Transverse colon (tissue), 4 donors: ENCODE measurements at regions of chr20 and their contacts with region 1.

Region 1: DNA sequence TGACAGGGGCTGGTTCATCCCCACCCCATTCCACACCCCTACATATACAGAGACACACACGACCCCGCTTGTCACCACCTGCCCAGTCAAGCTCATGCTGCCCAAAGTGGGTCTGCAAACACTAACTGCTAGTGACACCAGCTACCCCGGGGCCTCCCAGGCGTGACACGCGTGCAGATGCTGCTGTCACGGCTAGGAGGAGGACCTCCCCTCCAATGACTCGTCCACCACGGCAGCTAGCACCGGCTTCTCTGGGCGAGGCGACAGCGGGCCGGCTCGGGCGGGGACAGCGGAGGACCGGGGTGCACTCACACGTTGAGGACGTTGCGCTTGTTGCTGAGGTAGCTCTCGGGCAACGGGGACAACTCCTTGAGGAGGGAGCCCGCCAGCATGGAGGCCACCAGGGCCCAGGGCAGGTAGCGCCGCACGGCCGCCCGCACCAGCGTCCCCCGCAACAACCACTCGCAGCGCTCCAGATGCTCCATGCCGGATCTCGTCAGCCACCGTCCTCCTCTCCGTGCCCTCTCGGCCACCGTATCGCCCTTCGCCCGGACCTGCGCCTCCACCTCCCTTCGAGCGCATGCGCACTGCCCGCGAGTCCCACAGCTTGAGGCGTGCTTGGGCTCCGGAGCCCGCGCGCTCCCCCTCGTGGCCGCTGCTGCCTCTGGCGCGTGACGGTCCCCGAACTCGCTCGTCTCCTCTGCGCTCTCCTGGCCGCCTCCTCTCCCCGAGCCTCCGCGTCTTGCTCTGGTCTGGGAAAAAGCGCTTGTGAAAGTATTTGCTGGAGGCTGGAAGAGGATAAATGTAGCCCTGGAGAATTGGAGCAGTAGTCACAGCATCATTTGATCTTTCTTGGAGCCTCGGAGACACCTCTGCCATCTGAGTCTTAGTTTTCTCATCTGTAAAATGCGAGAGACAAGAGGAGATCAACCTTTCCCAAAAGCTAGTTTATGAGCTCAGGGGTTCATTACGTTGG is at the start of gene FITM2:
- DNase-seq: peak; percentile 99
- H3K4me3 ChIP-seq: peak within 1 kb of the TSS; percentile 58 to 77 (median 64)
- H3K27ac ChIP-seq: peak within 1 kb of the TSS; percentile 64 to 88 (median 84)
- H3K4me1 ChIP-seq: peaks cover 0 to 21% (median 16%) of the 10 kb centered on the region in 4 donors
- H3K27me3 ChIP-seq: no peaks in the 10 kb centered on the region
- CTCF ChIP-seq: peak; percentile 87 to 98 (median 95)
- EP300 ChIP-seq: no peak
- POLR2A ChIP-seq: peak; percentile 53
- total RNA-seq, gene FITM2: 4.1 to 12.4 (median 9.7) TPM

Region 2: DNA sequence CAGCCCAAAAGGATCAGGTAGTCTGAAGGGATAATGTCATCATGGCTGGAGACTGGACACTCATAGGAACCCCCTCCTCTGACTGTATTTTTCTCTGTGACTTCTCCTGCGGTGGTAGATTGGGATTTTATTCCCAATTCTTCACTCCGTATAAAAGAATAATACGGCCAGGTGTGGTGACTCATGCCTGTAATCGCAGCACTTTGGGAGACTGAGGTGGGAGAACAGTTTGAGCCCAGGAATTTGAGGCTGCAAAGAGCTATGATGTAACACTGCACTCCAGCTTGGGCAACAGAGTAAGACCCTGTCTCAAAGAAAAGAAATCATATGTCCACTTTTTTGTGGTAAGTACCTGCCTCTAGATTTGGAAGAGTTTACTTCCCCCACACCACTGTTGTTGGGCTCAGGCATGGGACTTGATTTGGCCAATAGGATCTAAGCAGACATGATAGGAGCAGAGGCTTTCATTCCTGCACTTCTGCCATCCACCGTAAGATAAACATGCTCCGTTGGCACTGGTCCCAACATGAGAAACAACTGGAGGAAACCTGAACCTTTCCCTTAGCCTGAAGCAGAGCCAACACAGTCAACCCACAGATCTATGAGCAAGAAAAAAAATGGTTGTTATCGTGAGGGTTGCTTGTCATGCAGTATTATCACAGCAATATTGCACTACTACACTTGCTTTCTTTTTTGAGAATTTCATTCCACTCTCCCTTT is 206.0 kb before region 1 on chr20:
- in situ Hi-C with region 1: loop called in 1 of 4 experiments (anchors 25 kb)
- intact Hi-C with region 1: no loop called
- DNase-seq: no peak
- H3K4me3 ChIP-seq: no peak overlapping the region
- H3K27ac ChIP-seq: no peak overlapping the region
- H3K4me1 ChIP-seq: no peaks in the 10 kb centered on the region
- H3K27me3 ChIP-seq: peaks cover 25% of the 10 kb centered on the region
- CTCF ChIP-seq: no peak
- EP300 ChIP-seq: no peak
- POLR2A ChIP-seq: no peak

Region 3: DNA sequence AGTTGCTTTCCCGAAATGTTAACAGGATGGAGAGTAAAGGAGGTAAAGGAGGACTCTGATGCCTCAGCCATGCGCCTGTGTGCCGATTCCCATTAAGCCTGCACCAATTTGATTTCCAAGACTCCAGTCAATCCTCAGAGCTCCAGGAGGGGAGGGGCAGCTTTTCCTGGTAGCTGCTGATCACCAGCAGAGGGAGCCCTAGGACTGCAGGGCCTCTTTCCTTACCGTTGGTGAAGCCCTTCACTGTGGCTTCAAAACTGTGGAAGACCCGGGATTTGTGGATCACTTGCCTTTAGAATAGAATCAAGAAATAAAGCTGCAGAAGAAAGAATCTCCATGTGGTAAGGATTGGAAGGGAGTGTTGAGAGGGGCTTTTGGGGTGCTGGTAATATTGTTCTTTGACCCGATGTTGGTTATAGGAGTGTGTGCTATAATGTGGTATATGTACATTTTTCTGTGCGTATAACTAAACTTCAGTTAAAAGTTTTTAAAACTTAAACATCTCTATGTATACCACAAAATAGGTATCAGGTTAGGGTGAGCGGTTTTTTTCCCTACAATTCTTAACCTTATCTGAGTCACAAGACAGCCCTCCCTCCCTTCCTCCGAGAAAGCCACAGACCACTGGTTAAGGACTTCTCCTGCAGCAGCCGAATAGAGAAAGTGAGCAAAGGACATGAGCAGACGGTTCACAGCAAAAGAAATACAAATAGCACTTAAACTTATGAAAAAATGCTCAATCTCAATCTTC is 93.4 kb before region 1 on chr20:
- in situ Hi-C with region 1: loop called (anchors 5 to 10 kb)
- intact Hi-C with region 1: no loop called
- DNase-seq: peak; percentile 85
- H3K4me3 ChIP-seq: no peak overlapping the region
- H3K27ac ChIP-seq: peak overlapping the region in 2 of 4 donors; percentile 10 to 24
- H3K4me1 ChIP-seq: peaks cover 5 to 17% (median 7%) of the 10 kb centered on the region in 4 donors
- H3K27me3 ChIP-seq: no peaks in the 10 kb centered on the region
- CTCF ChIP-seq: peak; percentile 84 to 95 (median 91)
- EP300 ChIP-seq: no peak
- POLR2A ChIP-seq: no peak

Region 4: DNA sequence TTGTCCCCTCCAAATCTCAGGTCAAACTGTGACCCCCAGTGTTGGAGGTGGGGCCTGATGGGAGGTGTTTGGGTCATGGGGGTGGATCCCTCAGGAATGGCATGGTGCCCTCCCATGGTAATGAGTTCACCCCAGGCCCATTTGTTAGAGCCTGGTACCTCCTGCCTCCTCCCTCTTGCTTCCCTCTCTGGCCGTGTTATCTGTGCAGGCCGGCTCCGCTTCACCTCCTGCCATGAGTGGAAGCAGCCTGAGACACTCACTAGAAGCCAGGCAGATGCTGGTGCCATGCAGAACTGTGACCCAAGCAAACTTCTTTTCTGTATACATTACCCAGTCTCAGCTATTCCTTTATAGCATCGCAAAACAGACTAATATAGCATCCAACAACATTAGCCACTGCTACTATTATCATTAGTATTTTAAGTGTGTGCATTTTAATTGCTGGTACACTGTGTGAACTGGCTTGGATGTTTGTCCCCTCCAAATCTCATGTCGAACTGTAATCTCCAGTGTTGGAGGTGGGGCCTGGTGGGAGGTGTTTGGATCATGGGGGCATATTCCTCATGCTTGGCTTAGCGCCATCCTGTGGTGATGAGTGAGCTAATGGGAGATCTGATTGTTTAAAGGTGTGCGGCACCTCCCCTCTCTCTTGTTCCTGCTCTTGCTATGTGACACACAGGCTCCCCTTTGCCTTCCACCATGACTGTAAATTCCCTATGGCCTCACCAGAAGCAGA is 88.2 kb before region 1 on chr20:
- in situ Hi-C with region 1: loop called (anchors 5 to 10 kb)
- intact Hi-C with region 1: no loop called
- DNase-seq: no peak
- H3K4me3 ChIP-seq: no peak overlapping the region
- H3K27ac ChIP-seq: peak overlapping the region in 3 of 4 donors; percentile 3 to 53 (median 28)
- H3K4me1 ChIP-seq: peaks cover 5 to 14% (median 10%) of the 10 kb centered on the region in 4 donors
- H3K27me3 ChIP-seq: no peaks in the 10 kb centered on the region
- CTCF ChIP-seq: no peak
- EP300 ChIP-seq: no peak
- POLR2A ChIP-seq: no peak